GM12878 (cell line): ENCODE measurements at regions of chr5 and their contacts with region 1.

Region 1: DNA sequence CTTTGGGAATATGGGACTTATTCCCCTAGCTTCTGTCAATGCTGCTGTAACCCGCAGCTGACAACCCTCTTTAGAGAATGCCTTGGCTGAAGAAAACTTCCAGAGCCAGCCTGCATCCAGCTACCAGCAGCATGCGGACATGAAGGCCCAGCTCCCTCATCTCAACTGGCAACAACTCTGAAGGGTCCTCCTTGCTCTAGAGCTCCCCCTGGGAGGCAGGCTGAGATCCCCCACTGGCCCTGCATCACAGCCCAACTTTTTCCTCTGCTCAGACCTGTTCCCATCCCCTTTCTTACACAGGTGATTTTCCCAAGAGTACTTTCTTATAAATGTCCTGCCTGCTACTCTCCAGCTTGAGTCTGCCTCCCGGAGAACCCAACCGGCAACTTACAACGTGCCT is 18.7 kb upstream of the WNT8A start:
- DNase-seq: no peak
- ATAC-seq: peak; percentile 66
- H3K4me3 ChIP-seq: no peak overlapping the region
- H3K27ac ChIP-seq: no peak overlapping the region
- H3K4me1 ChIP-seq: no peaks in the 10 kb centered on the region
- H3K27me3 ChIP-seq: no peaks in the 10 kb centered on the region
- CTCF ChIP-seq: peak; percentile 45 to 66 (median 45); a peak in 5 of 6 replicates
- EP300 ChIP-seq: no peak
- POLR2A ChIP-seq: no peak
- RAD21 ChIP-seq: peak; percentile 33; the same call in 1 of the 2 replicates

Region 2: DNA sequence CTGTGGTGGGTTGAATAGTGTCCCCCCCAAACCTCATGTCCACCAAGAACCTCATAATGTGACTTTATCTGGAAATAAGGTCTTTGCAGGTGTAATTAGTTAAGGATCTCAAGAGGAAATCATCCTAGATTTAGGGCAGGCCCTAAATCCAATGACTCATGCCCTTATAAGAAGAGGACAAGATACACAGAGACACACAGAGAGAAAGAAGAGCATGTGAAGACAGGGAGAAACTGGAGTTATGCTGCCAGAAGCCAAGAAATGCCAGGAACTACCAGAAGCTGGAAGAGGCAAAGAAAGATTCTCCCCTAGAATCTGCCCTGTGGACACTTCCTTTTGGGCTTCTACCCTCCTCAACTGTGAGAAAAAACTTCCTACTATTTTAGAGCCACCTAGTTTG is 41.0 kb before region 1 on chr5:
- CTCF ChIA-PET with region 1: interaction called, 19 read pairs
- POLR2A ChIA-PET with region 1: no interaction called
- RAD21 ChIA-PET with region 1: interaction called, 6 read pairs
- SMC1A ChIA-PET with region 1: interaction called, 5 read pairs
- in situ Hi-C with region 1: no loop called
- intact Hi-C with region 1: no loop called
- DNase-seq: no peak
- ATAC-seq: no peak
- H3K4me3 ChIP-seq: no peak overlapping the region
- H3K27ac ChIP-seq: no peak overlapping the region
- H3K4me1 ChIP-seq: peaks cover 13% of the 10 kb centered on the region
- H3K27me3 ChIP-seq: no peaks in the 10 kb centered on the region
- CTCF ChIP-seq: no peak
- EP300 ChIP-seq: no peak
- POLR2A ChIP-seq: no peak
- RAD21 ChIP-seq: no peak

Region 3: DNA sequence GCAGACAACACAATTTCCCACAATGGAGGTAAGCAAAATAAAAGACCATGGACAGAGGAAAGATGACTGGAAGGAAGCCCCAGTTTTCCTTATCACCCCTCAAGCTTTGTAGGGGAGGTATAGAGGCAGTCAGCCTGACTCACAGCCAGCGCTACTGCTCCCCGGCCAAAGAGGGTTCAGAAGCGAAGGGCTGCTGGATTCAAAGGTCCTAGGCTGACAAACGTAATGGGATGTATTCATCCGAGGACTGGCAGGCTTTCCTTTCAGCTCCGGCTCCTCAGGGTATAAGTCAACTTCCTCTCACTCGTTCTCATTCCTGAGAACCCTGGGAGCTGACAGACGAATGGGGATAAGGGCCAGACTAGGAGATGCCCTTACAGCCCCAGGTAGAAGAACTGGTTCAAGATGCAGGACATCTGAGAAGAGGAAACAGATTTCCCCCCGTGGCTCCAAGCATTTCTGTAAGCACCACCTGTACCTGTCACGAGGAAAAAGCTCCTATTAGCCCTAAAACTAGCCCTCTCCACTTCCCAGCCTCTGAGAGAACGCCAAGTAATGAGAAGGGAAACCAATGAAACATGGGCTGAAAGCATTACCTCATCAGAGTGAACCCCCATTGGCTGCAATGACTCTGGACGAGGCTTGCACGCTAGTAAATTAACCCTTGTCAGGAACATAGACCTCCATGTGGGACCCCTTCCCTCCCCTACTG is 10.1 kb before region 1 on chr5:
- CTCF ChIA-PET with region 1: interaction called, 24 read pairs
- POLR2A ChIA-PET with region 1: no interaction called
- RAD21 ChIA-PET with region 1: interaction called, 4 read pairs
- SMC1A ChIA-PET with region 1: interaction called, 12 read pairs
- in situ Hi-C with region 1: no loop called
- intact Hi-C with region 1: no loop called
- DNase-seq: no peak
- ATAC-seq: no peak
- H3K4me3 ChIP-seq: no peak overlapping the region
- H3K27ac ChIP-seq: no peak overlapping the region
- H3K4me1 ChIP-seq: no peaks in the 10 kb centered on the region
- H3K27me3 ChIP-seq: no peaks in the 10 kb centered on the region
- CTCF ChIP-seq: no peak
- EP300 ChIP-seq: no peak
- POLR2A ChIP-seq: no peak
- RAD21 ChIP-seq: no peak

Region 4: DNA sequence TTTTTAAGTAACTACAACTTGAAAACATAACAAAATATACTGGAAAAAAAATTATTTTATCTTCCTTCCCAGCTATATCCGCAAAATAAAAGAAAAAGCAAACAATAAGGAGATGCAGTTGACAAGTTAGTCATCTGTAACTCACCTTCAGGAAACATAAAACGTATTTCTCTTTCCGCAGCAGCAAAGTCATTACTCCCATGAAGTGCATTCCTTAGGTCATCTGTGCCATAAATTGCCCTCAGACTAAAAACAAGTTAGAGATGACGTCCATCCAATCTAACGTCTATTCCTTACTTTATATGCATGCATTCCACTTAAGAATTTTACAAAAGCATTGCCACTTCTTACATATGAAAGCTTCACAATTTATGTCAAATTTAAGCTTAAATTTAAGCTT is 63.2 kb after region 1 on chr5:
- CTCF ChIA-PET with region 1: interaction called, 23 read pairs
- POLR2A ChIA-PET with region 1: no interaction called
- RAD21 ChIA-PET with region 1: interaction called, 3 read pairs
- SMC1A ChIA-PET with region 1: interaction called, 6 read pairs
- in situ Hi-C with region 1: no loop called
- intact Hi-C with region 1: no loop called
- DNase-seq: no peak
- ATAC-seq: no peak
- H3K4me3 ChIP-seq: no peak overlapping the region
- H3K27ac ChIP-seq: no peak overlapping the region
- H3K4me1 ChIP-seq: no peaks in the 10 kb centered on the region
- H3K27me3 ChIP-seq: no peaks in the 10 kb centered on the region
- CTCF ChIP-seq: no peak
- EP300 ChIP-seq: no peak
- POLR2A ChIP-seq: no peak
- RAD21 ChIP-seq: no peak